Activated CD4-positive, alpha-beta memory T cell treated with anti-CD3 and anti-CD28 coated beads, Interleukin-2, amount 10 ng/mL, durations not matched to agents 7 days and 5 days (primary cell): ENCODE measurements at regions of chr12 and their contacts with region 1.

Region 1: DNA sequence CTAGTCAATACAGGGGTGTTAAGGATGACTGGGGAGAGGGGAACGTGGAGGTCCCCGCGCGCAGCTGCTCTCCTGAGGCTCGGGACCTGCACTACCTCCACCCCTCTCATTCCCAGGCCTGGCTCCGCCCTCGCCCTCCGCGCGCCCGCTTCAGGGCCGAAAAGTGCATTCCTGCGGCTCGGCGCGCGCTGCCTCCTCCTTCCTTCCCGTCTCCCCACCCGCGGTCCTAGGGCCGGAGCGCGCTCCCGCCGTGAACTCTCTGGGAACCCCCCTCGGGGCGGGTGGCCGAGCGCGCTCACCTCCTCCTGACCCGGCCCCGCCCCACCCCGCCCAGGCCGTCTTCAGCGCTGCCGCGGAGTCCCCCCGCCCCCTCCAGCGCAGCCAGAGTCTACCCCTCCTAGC is 11.2 kb downstream of the RARG start:
- DNase-seq: peak; percentile 88
- H3K4me3 Mint-ChIP-seq: peak overlapping the region; percentile 93
- H3K27ac Mint-ChIP-seq: peak overlapping the region; percentile 96
- H3K4me1 Mint-ChIP-seq: peaks cover 80% of the 10 kb centered on the region
- H3K27me3 Mint-ChIP-seq: no peaks in the 10 kb centered on the region

Region 2: GRCh38 chr12:53180220-53180930 is 40.4 kb before region 1 on chr12 and contains the starts of genes CSAD and ZNF740:
- CTCF ChIA-PET with region 1: no interaction called
- POLR2A ChIA-PET with region 1: interaction called, 21 read pairs
- DNase-seq: peak; percentile 98
- H3K4me3 Mint-ChIP-seq: peak within 1 kb of the TSS; percentile 84
- H3K27ac Mint-ChIP-seq: peak within 1 kb of the TSS; percentile 93
- H3K4me1 Mint-ChIP-seq: peaks cover 58% of the 10 kb centered on the region
- H3K27me3 Mint-ChIP-seq: no peaks in the 10 kb centered on the region
- total RNA-seq, gene CSAD: 28.6 to 31.0 TPM
- total RNA-seq, gene ZNF740: 33.7 to 45.5 TPM

Region 3: GRCh38 chr12:53205747-53206419 is 14.9 kb before region 1 on chr12:
- CTCF ChIA-PET with region 1: interaction called, 74 read pairs
- POLR2A ChIA-PET with region 1: interaction called, 117 read pairs
- DNase-seq: peak; percentile 90
- H3K4me3 Mint-ChIP-seq: peak overlapping the region; percentile 78
- H3K27ac Mint-ChIP-seq: peak overlapping the region; percentile 84
- H3K4me1 Mint-ChIP-seq: peaks cover 82% of the 10 kb centered on the region
- H3K27me3 Mint-ChIP-seq: no peaks in the 10 kb centered on the region

Region 4: DNA sequence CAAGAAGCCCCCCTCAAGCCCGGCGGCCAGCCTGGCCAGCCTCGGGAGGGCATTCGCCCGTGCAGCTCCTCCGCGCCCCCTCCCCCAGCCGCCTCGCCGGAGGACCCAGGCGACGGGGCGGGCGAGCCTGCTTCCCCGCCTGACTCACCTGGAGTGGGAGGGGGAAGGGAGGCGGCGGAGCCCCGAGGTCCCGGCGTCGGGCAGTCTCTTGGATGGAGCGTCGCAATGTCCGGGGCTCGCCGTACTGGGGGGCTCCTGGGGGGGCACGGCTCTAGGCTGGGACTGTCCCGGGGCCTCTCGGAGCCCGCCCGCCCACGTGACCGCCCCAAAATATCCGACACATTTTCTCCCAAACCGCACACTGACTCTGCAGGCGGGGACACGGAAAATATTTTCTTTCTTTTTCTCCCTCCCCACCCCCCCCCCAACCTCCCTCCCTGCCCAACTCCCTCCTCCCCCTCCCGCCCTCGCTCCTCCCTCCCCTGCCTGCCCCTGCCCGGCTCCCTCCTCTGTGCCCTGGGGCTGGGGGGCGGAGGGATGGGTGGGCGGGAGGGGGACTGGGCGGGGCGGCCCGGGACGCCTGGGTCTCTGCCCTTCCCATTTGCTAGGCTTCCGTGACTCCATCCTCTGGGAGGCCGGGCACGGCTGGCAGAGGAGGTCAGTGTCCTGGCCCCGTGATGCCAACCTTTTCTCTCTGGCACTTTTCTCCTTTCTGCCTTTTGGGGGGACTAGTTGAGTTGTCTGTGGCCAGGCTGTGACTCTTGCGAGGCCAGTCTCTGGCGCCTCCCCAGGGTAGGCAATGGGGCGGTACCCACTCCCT is 11.2 kb after region 1 on chr12 and contains the start of gene RARG:
- CTCF ChIA-PET with region 1: interaction called, 5 read pairs
- POLR2A ChIA-PET with region 1: interaction called, 108 read pairs
- DNase-seq: peak; percentile 72
- H3K4me3 Mint-ChIP-seq: peak within 1 kb of the TSS; percentile 83
- H3K27ac Mint-ChIP-seq: peak within 1 kb of the TSS; percentile 79
- H3K4me1 Mint-ChIP-seq: peaks cover 68% of the 10 kb centered on the region
- H3K27me3 Mint-ChIP-seq: no peaks in the 10 kb centered on the region
- total RNA-seq, gene RARG: 46.1 to 47.4 TPM

Region 5: GRCh38 chr12:53251477-53252348 is 30.9 kb after region 1 on chr12:
- CTCF ChIA-PET with region 1: interaction called, 211 read pairs
- POLR2A ChIA-PET with region 1: interaction called, 13 read pairs
- DNase-seq: peak; percentile 79
- H3K4me3 Mint-ChIP-seq: peak overlapping the region; percentile 97
- H3K27ac Mint-ChIP-seq: peak overlapping the region; percentile 81
- H3K4me1 Mint-ChIP-seq: peaks cover 52% of the 10 kb centered on the region
- H3K27me3 Mint-ChIP-seq: no peaks in the 10 kb centered on the region

Region 6: GRCh38 chr12:53295070-53295890 is 74.5 kb after region 1 on chr12 and contains the start of gene PFDN5:
- CTCF ChIA-PET with region 1: interaction called, 105 read pairs
- POLR2A ChIA-PET with region 1: interaction called, 24 read pairs
- DNase-seq: peak; percentile 90
- H3K4me3 Mint-ChIP-seq: peak within 1 kb of the TSS; percentile 97
- H3K27ac Mint-ChIP-seq: peak within 1 kb of the TSS; percentile 88
- H3K4me1 Mint-ChIP-seq: peaks cover 53% of the 10 kb centered on the region
- H3K27me3 Mint-ChIP-seq: no peaks in the 10 kb centered on the region
- total RNA-seq, gene PFDN5: 300 to 301 TPM